Sigmoid colon (tissue), 7 donors: ENCODE measurements at regions of chr17 and their contacts with region 1.

Region 1: DNA sequence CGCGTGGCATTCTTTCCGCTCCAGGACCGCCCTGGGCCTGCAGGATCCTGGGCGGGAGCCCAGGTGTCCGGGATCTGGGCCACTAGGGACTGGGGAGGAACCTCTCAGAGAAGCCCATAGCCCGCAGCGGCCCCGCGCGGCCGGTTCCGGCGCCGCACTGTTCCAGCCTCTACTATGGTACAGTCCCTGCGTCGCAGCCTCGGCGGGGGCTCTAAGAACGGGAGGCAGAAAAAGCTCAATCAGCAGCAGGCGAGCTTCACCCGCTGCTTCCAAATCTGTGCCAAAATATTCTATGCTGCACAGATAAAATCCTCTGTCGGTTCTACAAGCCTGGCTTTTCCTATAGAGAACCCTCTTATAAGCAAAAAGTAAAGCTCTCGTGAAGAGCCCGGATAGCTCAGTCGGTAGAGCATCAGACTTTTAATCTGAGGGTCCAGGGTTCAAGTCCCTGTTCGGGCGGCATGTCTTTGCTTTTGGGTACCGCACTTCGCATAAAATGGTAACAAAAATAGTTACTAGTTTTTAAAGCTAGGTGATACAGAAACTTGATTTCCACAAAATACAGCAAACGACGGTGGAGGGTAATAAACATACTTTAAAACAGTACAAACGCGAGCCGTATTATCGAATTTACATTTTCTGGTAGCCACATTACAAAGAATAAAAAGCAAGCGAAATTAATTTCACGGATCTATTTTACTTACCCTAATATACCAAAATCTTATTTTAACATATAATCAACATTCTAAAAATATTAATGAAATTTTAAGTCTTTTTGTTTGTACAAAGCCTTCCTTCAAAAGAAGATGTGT is 661 bp upstream of the ALOXE3 start:
- DNase-seq: peak; percentile 96
- H3K4me3 ChIP-seq: peak overlapping the region; percentile 40 to 59 (median 53)
- H3K27ac ChIP-seq: peak overlapping the region; percentile 76 to 87 (median 80)
- H3K4me1 ChIP-seq: peaks cover 0 to 57% (median 54%) of the 10 kb centered on the region in 4 donors
- H3K27me3 ChIP-seq: peaks cover 12 to 78% (median 71%) of the 10 kb centered on the region in 3 donors
- CTCF ChIP-seq: peak; percentile 90 to 95 (median 90)
- EP300 ChIP-seq: no peak
- POLR2A ChIP-seq: no peak

Region 2: GRCh38 chr17:8057691-8058114 is 61.3 kb before region 1 on chr17:
- intact Hi-C with region 1: loop called (anchors 5 kb)
- DNase-seq: peak; percentile 72
- H3K4me3 ChIP-seq: no peak overlapping the region
- H3K27ac ChIP-seq: no peak overlapping the region
- H3K4me1 ChIP-seq: peaks cover 0 to 9% (median 6%) of the 10 kb centered on the region in 4 donors
- H3K27me3 ChIP-seq: peaks cover 11 to 70% (median 49%) of the 10 kb centered on the region in 3 donors
- CTCF ChIP-seq: peak; percentile 50 to 72 (median 66)
- EP300 ChIP-seq: no peak
- POLR2A ChIP-seq: no peak

Region 3: DNA sequence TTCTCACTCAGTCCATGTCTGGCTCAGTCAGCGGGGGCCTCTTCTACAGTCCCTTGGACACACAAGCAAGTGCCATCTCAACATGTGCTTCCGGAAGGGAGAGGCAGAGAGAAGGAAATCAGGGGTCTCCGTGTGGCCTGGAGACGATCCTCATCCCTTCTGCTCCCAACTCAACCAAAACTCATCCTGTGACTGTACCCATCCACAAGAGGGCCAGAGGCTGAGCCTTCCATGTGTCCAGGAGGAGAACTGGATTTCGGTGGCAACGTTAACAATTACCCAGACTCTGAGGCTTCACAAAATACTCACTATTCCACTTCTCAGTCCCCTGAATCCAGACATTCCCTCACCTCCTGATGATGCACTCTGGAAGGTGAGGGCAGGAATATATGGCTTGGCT is 23.6 kb before region 1 on chr17:
- intact Hi-C with region 1: loop called (anchors 2 kb)
- DNase-seq: no peak
- H3K4me3 ChIP-seq: no peak overlapping the region
- H3K27ac ChIP-seq: no peak overlapping the region
- H3K4me1 ChIP-seq: no peaks in the 10 kb centered on the region
- H3K27me3 ChIP-seq: peaks cover 0 to 21% (median 0%) of the 10 kb centered on the region in 3 donors
- CTCF ChIP-seq: no peak
- EP300 ChIP-seq: no peak
- POLR2A ChIP-seq: no peak

Region 4: GRCh38 chr17:8176197-8176940 is 57.4 kb after region 1 on chr17 and contains the start of gene TMEM107:
- intact Hi-C with region 1: loop called (anchors 5 kb)
- DNase-seq: peak; percentile 94
- H3K4me3 ChIP-seq: peak within 1 kb of the TSS; percentile 40 to 63 (median 56)
- H3K27ac ChIP-seq: peak within 1 kb of the TSS; percentile 78 to 85 (median 84)
- H3K4me1 ChIP-seq: peaks cover 0 to 37% (median 26%) of the 10 kb centered on the region in 4 donors
- H3K27me3 ChIP-seq: no peaks in the 10 kb centered on the region
- CTCF ChIP-seq: no peak
- EP300 ChIP-seq: no peak
- POLR2A ChIP-seq: peak in 1 of 2 donors; percentile 45
- total RNA-seq, gene TMEM107: 8.3 to 61.7 (median 20.6) TPM

Region 5: DNA sequence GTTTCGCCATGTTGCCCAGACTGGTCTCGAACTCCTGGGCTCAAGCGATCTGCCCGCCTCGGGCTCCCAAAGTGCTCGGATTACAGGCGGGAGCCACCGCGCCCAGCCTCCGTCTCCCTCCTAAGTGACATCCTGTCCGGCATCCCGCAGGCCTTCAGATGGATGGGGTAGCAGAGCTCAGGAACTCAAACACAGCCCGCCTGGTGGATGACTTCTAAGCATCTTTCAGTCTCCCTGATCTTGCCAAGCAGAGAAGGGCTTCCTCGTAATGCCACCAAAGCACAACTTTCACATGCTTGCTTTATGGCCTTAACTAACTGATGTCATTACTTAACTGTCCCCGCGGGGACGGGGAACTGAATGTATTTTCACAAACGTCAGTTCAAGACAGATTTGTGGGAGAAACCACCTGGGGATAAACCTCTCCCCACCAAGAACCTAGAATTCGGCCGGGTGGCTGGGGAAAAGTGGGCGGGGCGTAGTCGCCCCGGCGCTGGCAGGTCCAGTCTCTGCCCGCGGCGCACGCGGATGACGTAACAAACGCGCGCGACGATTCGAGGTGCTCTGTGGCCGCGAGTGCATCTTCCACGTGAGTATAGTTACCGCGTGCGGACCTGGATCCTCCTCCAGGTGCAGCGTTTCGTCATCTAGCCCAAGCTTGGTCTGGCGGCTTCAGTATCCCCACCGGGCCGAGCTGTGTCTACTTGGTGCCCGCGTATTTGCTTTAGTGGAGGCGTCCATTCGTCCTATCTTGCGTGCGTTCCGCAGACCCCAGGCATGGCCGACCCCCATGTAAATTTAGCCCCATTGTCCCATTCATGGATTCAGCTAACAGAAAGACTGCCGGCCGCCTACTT is 130.0 kb after region 1 on chr17 and contains the start of gene PFAS:
- intact Hi-C with region 1: loop called (anchors 2 kb)
- DNase-seq: peak; percentile 97
- H3K4me3 ChIP-seq: peak within 1 kb of the TSS; percentile 60 to 66 (median 62)
- H3K27ac ChIP-seq: peak within 1 kb of the TSS; percentile 95 to 98 (median 98)
- H3K4me1 ChIP-seq: peaks cover 0 to 34% (median 17%) of the 10 kb centered on the region in 4 donors
- H3K27me3 ChIP-seq: no peaks in the 10 kb centered on the region
- CTCF ChIP-seq: no peak
- EP300 ChIP-seq: peak in 2 of 4 donors; percentile 7
- POLR2A ChIP-seq: peak in 1 of 2 donors; percentile 14
- total RNA-seq, gene PFAS: 4.6 to 10.2 (median 6.9) TPM